ENCODE measurements at regions of chr1 and their contacts with region 1.

Region 1: DNA sequence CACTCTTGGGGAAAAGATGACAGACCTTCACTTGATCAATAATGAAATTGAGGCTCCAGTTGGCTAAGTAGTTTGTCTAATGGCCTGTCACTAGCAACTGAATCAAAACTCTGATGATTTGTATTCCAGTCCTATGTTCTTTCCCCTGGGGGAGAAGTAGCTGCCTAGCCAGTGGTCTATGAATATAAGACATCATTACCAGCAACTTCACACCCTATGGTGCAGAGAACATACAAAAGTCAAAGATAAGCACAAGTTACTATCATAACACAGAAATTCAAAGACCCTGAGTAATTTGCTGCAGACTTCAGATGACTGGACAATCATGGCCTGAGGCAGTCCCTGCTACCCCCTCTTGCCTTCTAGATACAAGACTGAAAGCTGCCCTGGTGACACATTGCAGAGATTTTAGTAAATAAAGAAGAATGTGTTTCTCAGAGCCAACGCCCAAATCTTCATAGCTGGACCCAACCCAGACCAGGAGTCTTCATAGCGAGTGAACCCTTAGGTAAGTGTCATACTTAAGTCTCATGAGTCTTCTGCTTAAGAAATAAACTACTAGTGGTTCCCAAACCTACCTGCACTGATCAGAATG is 985 bp downstream of the PDZK1 start:
- DNase-seq: no peak
- H3K4me3 ChIP-seq: no peak overlapping the region
- H3K27ac ChIP-seq: no peak overlapping the region
- H3K4me1 ChIP-seq: peaks cover 0 to 16% of the 10 kb centered on the region in 2 experiments; a peak in 1 of 4 replicates
- H3K27me3 ChIP-seq: no peaks in the 10 kb centered on the region
- CTCF ChIP-seq: no peak
- EP300 ChIP-seq: no peak
- RAD21 ChIP-seq: no peak

Region 2: DNA sequence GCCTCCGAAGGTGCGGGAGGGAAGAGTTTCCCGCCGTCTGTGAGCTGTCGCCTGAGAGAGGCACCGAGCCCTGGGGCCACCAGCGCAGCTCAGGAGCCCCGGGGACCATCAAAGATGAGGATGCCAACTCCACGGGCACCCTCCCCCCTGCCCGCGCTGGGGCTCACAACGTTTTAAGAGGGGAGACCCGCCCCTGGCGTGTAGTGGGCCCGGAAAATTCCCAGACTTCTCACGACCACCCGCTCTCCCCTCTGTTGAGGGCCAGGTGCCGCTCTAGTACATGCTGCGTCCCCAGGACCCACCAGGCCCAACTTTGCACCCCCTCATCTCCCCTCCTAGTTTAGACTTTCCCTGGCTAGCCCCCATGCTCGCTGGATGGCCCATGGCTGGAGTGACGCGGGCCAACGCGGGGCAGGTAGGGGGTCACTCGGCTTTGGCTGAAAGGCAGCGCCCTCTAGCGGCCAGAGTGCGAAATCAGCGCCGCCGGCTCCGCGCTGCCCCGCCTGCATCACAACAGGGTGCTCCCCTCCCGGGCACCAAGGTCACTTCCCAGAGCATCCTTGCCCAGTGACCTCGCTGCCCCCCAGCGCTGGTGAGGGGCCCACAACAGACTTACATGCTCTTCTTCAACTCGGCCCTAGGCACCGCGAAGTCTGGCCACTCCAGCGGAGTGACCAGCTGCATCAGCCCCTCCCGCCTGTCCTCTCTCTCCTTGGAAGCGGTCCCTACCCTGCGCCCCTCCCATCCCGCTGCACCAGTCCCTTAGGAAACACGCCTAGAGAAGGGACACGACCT is 14.9 kb after region 1 on chr1:
- CTCF ChIA-PET with region 1: interaction called, 70 read pairs
- POLR2A ChIA-PET with region 1: no interaction called
- DNase-seq: peak; percentile 88
- H3K4me3 ChIP-seq: peak overlapping the region; percentile 39 to 56
- H3K27ac ChIP-seq: no peak overlapping the region
- H3K4me1 ChIP-seq: peaks cover 0 to 17% of the 10 kb centered on the region in 2 experiments; a peak in 1 of 4 replicates
- H3K27me3 ChIP-seq: no peaks in the 10 kb centered on the region
- CTCF ChIP-seq: peak; percentile 88
- EP300 ChIP-seq: no peak
- RAD21 ChIP-seq: peak; percentile 76

Region 3: GRCh38 chr1:145795257-145795881 is 89.2 kb after region 1 on chr1:
- CTCF ChIA-PET with region 1: no interaction called
- POLR2A ChIA-PET with region 1: no interaction called
- DNase-seq: no peak
- H3K4me3 ChIP-seq: no peak overlapping the region
- H3K27ac ChIP-seq: no peak overlapping the region
- H3K4me1 ChIP-seq: no peaks in the 10 kb centered on the region
- H3K27me3 ChIP-seq: no peaks in the 10 kb centered on the region
- CTCF ChIP-seq: no peak
- EP300 ChIP-seq: no peak
- RAD21 ChIP-seq: no peak